Panc1 (cell line): ENCODE measurements at regions of chr20 and their contacts with region 1.

Region 1: GRCh38 chr20:46035713-46036112 is 6.7 kb downstream of the SLC12A5 start:
- DNase-seq: no peak
- ATAC-seq: no peak
- H3K4me3 ChIP-seq: no peak overlapping the region
- H3K27ac ChIP-seq: no peak overlapping the region
- H3K4me1 ChIP-seq: no peaks in the 10 kb centered on the region; the same call in 1 of the 2 replicates
- H3K27me3 ChIP-seq: peaks cover 24% of the 10 kb centered on the region
- CTCF ChIP-seq: no peak

Region 2: GRCh38 chr20:45987108-45987780 is 48.5 kb before region 1 on chr20:
- CTCF ChIA-PET with region 1: interaction called, 10 read pairs
- POLR2A ChIA-PET with region 1: interaction called, 5 read pairs
- in situ Hi-C with region 1: no loop called
- intact Hi-C with region 1: no loop called
- DNase-seq: no peak
- ATAC-seq: peak; percentile 98
- H3K4me3 ChIP-seq: no peak overlapping the region
- H3K27ac ChIP-seq: no peak overlapping the region
- H3K4me1 ChIP-seq: peaks cover 2% of the 10 kb centered on the region; the same call in 1 of the 2 replicates
- H3K27me3 ChIP-seq: no peaks in the 10 kb centered on the region
- CTCF ChIP-seq: peak; percentile 96